ENCODE measurements at regions of chr6 and their contacts with region 1.

Region 1: DNA sequence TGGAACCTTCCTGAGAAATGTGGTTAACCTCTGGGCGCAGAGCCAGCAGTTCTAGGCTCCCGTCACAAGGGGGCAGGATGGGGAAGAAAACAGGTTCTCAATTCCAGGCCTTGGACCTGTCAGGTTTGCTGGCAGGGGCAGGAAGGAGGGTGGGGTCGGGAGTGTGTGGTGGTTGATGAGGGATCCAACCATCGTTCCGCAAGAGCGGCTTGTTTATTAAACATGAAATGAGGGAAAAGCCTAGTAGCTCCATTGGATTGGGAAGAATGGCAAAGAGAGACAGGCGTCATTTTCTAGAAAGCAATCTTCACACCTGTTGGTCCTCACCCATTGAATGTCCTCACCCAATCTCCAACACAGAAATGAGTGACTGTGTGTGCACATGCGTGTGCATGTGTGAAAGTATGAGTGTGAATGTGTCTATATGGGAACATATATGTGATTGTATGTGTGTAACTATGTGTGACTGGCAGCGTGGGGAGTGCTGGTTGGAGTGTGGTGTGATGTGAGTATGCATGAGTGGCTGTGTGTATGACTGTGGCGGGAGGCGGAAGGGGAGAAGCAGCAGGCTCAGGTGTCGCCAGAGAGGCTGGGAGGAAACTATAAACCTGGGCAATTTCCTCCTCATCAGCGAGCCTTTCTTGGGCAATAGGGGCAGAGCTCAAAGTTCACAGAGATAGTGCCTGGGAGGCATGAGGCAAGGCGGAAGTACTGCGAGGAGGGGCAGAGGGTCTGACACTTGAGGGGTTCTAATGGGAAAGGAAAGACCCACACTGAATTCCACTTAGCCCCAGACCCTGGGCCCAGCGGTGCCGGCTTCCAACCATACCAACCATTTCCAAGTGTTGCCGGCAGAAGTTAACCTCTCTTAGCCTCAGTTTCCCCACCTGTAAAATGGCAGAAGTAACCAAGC is 29.6 kb downstream of the SRSF3 start:
- DNase-seq: peak; percentile 83
- ATAC-seq: peak; percentile 94
- H3K4me3 Mint-ChIP-seq: no peak overlapping the region
- H3K27ac Mint-ChIP-seq: peak overlapping the region; percentile 61
- H3K4me1 Mint-ChIP-seq: peaks cover 13% of the 10 kb centered on the region
- H3K27me3 Mint-ChIP-seq: no peaks in the 10 kb centered on the region
- CTCF ChIP-seq: peak; percentile 88

Region 2: GRCh38 chr6:36533321-36533720 is 90.5 kb before region 1 on chr6:
- CTCF ChIA-PET with region 1: no interaction called
- POLR2A ChIA-PET with region 1: no interaction called
- intact Hi-C with region 1: no loop called
- DNase-seq: no peak
- ATAC-seq: no peak
- H3K4me3 Mint-ChIP-seq: no peak overlapping the region
- H3K27ac Mint-ChIP-seq: no peak overlapping the region
- H3K4me1 Mint-ChIP-seq: peaks cover 63% of the 10 kb centered on the region
- H3K27me3 Mint-ChIP-seq: no peaks in the 10 kb centered on the region
- CTCF ChIP-seq: no peak

Region 3: GRCh38 chr6:36605560-36606391 is 18.0 kb before region 1 on chr6:
- CTCF ChIA-PET with region 1: interaction called, 26 read pairs
- POLR2A ChIA-PET with region 1: interaction called, 10 read pairs
- intact Hi-C with region 1: no loop called
- DNase-seq: no peak
- ATAC-seq: no peak
- H3K4me3 Mint-ChIP-seq: no peak overlapping the region
- H3K27ac Mint-ChIP-seq: peak overlapping the region; percentile 70
- H3K4me1 Mint-ChIP-seq: peaks cover 70% of the 10 kb centered on the region
- H3K27me3 Mint-ChIP-seq: no peaks in the 10 kb centered on the region
- CTCF ChIP-seq: no peak

Region 4: DNA sequence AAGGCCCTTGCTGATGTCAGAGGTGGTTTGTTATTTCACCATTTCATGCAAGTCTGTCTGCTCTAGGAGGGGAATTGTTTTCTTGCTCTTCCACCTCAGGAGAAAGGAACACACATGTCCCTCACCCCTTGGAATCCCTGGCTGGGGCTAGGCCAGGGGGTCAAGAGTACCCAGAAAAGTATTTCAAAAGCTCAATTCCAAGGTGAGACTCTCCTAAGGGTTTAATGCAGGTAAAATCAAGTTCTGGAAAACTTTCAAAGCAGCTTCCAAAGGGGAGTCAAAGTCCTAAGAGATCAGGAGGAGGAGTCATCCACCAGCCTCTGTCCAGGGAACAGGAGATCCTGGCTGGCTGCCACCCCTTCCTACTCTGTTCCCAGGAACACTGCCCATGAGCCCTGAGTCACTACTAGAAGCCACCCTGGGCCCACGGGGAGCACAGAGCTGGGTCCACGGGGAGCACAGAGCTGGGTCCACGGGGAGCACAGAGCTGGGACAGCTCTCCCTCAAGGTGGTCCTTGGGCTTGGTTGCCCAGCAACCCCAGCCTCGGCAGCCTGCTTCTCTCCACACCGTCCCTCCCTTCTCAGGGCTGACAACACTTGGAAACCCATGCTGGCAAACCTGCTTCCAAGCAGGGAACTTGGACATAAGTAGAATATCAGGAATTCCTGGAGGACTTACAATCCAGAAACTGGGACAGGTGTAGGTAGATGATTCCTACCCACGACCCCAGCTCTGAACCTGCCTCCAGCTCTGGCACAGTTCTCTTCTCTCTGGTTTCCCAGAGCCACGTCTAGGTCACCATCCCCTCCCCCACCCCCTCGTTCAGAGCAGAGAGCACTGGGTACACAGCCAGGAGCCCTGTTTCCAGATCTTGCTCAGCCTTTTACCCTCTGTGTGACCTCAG is 19.4 kb after region 1 on chr6:
- CTCF ChIA-PET with region 1: interaction called, 10 read pairs
- POLR2A ChIA-PET with region 1: no interaction called
- intact Hi-C with region 1: no loop called
- DNase-seq: no peak
- ATAC-seq: no peak
- H3K4me3 Mint-ChIP-seq: no peak overlapping the region
- H3K27ac Mint-ChIP-seq: no peak overlapping the region
- H3K4me1 Mint-ChIP-seq: no peaks in the 10 kb centered on the region
- H3K27me3 Mint-ChIP-seq: no peaks in the 10 kb centered on the region
- CTCF ChIP-seq: no peak

Region 5: GRCh38 chr6:36678518-36679027 is 54.8 kb after region 1 on chr6 and contains the start of gene CDKN1A:
- CTCF ChIA-PET with region 1: interaction called, 6 read pairs
- POLR2A ChIA-PET with region 1: interaction called, 3 read pairs
- intact Hi-C with region 1: loop called (anchors 5 kb)
- DNase-seq: peak; percentile 84
- ATAC-seq: peak; percentile 62
- H3K4me3 Mint-ChIP-seq: peak within 1 kb of the TSS; percentile 91
- H3K27ac Mint-ChIP-seq: peak within 1 kb of the TSS; percentile 72
- H3K4me1 Mint-ChIP-seq: peaks cover 50% of the 10 kb centered on the region
- H3K27me3 Mint-ChIP-seq: peaks cover 4% of the 10 kb centered on the region
- CTCF ChIP-seq: no peak
- total RNA-seq, gene CDKN1A: 42.3 to 47.4 TPM